ENCODE measurements at regions of chr14 and their contacts with region 1.

Region 1: DNA sequence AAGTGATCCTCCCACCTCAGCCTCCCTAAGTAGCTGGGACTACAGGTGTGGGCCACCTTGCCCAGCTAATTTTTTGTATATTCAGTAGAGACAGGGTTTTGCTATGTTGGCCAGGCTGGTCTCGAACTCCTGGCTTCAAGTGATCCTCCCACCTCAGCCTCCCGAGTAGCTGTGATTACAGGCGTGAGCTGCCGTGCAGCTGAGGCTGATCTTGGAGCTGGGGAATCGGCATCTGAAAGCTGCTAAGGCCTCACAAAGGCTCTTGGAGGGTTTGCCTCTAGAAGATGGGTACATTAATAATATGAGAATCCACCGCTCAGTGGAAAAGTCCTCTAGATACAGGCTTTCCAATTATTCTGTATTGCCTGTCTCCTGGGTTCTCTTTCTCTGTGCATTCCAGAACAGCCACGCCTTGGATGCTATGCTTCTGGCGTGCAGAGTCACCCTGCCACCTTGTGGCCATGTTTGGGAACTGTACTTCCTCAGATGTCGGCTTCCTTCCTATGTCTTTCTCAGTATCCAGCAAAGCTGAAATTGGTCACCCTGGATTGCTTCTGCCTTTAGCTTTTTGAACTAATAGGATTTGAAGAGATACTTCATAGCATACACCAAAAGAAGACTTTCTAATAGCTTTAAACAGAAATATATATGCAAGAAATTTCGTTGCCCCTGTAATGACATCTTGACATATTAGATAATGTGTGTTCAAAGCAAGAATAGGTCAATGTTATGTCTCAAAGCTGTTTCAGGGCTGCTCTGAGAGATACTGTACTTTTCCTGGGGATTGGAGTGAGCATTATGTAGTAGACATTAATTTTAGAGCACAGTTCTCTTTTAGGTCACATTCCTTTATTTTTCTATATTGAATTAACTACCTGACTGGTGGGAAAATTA is 75.4 kb downstream of the SNAPC1 start:
- DNase-seq: peak; percentile 86
- H3K4me3 Mint-ChIP-seq: no peak overlapping the region
- H3K27ac Mint-ChIP-seq: no peak overlapping the region
- H3K4me1 Mint-ChIP-seq: no peaks in the 10 kb centered on the region
- H3K27me3 Mint-ChIP-seq: no peaks in the 10 kb centered on the region
- CTCF ChIP-seq: peak; percentile 93

Region 2: GRCh38 chr14:61296719-61297502 is 540.7 kb before region 1 on chr14:
- CTCF ChIA-PET with region 1: interaction called, 13 read pairs
- POLR2A ChIA-PET with region 1: no interaction called
- intact Hi-C with region 1: loop called (anchors 1 kb)
- DNase-seq: peak; percentile 61
- H3K4me3 Mint-ChIP-seq: no peak overlapping the region
- H3K27ac Mint-ChIP-seq: no peak overlapping the region
- H3K4me1 Mint-ChIP-seq: no peaks in the 10 kb centered on the region
- H3K27me3 Mint-ChIP-seq: no peaks in the 10 kb centered on the region
- CTCF ChIP-seq: peak; percentile 63

Region 3: DNA sequence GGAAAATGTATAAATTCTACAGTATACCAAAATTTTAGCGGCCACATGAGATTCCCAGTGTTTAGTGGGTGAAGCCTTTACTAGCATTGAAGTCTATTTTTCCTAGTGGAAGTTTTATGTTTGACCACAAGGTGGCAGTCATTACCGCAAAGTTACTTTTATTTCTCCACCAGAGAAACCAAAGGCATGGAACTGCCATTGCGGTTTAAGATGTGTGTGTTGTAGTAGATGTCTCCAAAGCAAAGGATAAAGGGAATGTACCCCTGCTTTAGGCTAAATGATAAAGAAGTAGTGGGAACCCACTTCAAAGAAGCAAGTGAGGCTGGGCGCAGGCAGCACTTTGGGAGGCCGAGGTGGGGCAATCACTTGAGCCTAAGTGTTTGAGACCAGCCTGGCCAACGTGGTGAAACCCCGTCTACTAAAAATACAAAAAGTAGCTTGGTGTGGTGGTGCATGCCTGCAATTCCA is 375.7 kb before region 1 on chr14:
- CTCF ChIA-PET with region 1: interaction called, 62 read pairs
- POLR2A ChIA-PET with region 1: interaction called, 6 read pairs
- intact Hi-C with region 1: loop called (anchors 1 kb)
- DNase-seq: peak; percentile 78
- H3K4me3 Mint-ChIP-seq: no peak overlapping the region
- H3K27ac Mint-ChIP-seq: peak overlapping the region; percentile 22
- H3K4me1 Mint-ChIP-seq: peaks cover 27% of the 10 kb centered on the region
- H3K27me3 Mint-ChIP-seq: no peaks in the 10 kb centered on the region
- CTCF ChIP-seq: peak; percentile 60

Region 4: DNA sequence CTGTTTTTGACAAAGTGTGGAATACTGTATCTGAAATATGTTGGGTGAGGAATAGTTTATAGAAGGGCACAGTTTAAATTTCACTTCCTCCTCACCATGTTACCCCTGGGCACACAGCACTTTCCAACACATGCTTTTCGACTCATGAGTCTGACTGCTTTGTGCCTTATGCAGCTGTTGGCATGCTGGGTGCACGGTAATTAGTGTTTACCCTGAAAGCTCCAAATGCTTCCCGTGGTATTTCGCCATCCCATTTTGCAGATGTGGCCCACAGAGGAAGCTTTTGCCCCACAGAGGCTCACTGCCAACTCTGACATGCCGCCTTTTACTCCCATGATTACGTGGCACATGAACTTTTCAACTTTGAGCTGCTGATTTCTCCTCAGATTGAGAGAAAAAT is 347.7 kb before region 1 on chr14:
- CTCF ChIA-PET with region 1: no interaction called
- POLR2A ChIA-PET with region 1: no interaction called
- intact Hi-C with region 1: no loop called
- DNase-seq: peak; percentile 91
- H3K4me3 Mint-ChIP-seq: no peak overlapping the region
- H3K27ac Mint-ChIP-seq: no peak overlapping the region
- H3K4me1 Mint-ChIP-seq: peaks cover 4% of the 10 kb centered on the region
- H3K27me3 Mint-ChIP-seq: no peaks in the 10 kb centered on the region
- CTCF ChIP-seq: no peak

Region 5: DNA sequence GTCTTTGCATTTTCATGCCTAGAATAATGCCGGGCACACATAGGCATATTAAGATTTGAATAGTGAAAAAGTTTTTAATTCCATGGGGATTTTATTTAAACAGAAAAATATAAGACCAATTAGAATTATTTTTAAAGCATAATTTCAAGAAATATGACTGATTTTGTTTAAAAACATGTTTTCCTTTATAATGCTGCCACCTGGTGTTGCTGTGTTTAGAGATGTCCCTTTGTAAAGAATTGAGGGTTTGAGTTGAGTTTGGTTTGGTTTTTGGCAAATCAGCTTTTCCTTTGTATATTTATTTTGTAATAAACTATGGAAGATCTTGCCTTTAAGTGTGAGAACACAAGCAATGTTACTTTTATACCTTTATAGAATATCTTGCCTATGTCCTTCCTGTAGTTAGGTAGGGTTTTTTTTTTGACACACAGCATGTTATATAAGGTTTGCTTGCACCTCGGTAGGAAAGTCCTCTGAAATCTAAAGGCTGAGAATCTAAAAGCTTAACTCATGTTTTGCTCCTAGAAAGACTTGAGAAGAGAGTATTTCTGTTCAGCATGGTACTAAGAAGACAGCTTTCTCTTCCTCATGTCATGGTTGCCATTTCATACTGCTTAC is 106.7 kb before region 1 on chr14:
- CTCF ChIA-PET with region 1: interaction called, 4 read pairs
- POLR2A ChIA-PET with region 1: no interaction called
- intact Hi-C with region 1: loop called (anchors 5 kb)
- DNase-seq: no peak
- H3K4me3 Mint-ChIP-seq: no peak overlapping the region
- H3K27ac Mint-ChIP-seq: peak overlapping the region; percentile 28
- H3K4me1 Mint-ChIP-seq: peaks cover 5% of the 10 kb centered on the region
- H3K27me3 Mint-ChIP-seq: no peaks in the 10 kb centered on the region
- CTCF ChIP-seq: peak; percentile 52

Region 6: GRCh38 chr14:61761959-61762786 is 75.4 kb before region 1 on chr14 and contains the start of gene SNAPC1:
- CTCF ChIA-PET with region 1: interaction called, 16 read pairs
- POLR2A ChIA-PET with region 1: interaction called, 6 read pairs
- intact Hi-C with region 1: no loop called
- DNase-seq: peak; percentile 99
- H3K4me3 Mint-ChIP-seq: peak within 1 kb of the TSS; percentile 92
- H3K27ac Mint-ChIP-seq: peak within 1 kb of the TSS; percentile 91
- H3K4me1 Mint-ChIP-seq: peaks cover 21% of the 10 kb centered on the region
- H3K27me3 Mint-ChIP-seq: no peaks in the 10 kb centered on the region
- CTCF ChIP-seq: no peak
- total RNA-seq, gene SNAPC1: 18.4 and 21.0 TPM in 2 replicates

Region 7: DNA sequence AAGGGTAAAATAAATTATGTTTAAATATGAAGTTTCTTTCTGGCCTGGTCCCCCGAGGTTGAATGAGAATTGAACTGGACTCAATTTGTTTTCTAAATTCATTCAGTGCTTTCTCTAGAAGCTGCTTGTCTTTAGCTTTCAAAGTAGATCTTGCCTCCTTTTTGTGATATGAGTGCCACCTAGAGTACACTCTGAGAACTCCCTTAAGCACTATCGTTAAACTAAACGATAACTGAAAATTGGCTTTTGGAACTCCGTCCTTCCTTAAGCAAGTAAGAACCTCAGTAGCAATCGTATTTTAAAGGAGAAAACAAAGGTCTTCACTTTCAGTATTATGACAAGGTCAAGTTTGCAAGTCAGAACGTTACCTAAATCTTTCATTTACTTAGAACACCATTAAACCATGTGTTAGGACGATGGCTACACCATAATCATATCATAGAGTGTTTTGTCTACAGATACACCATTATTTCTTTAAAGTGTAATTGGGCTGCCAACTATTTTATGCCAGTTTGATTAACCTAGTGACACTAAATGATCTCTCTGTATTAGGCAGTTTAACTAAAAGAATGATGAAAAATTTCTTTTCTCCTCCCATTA is 289.4 kb after region 1 on chr14:
- CTCF ChIA-PET with region 1: interaction called, 10 read pairs
- POLR2A ChIA-PET with region 1: interaction called, 3 read pairs
- intact Hi-C with region 1: no loop called
- DNase-seq: peak; percentile 69
- H3K4me3 Mint-ChIP-seq: no peak overlapping the region
- H3K27ac Mint-ChIP-seq: no peak overlapping the region
- H3K4me1 Mint-ChIP-seq: no peaks in the 10 kb centered on the region
- H3K27me3 Mint-ChIP-seq: peaks cover 35% of the 10 kb centered on the region
- CTCF ChIP-seq: peak; percentile 69